ENCODE measurements at regions of chr19 and their contacts with region 1.

Region 1: GRCh38 chr19:17511724-17512573 is 500 bp downstream of the PGLS start:
- DNase-seq: peak; percentile 82 to 97 (median 94)
- ATAC-seq: peak; percentile 78 to 83
- H3K4me3 Mint-ChIP-seq: peak overlapping the region; percentile 88 to 100 (median 100)
- H3K27ac Mint-ChIP-seq: peak overlapping the region; percentile 92 to 99 (median 95)
- H3K4me1 Mint-ChIP-seq: peaks cover 19 to 54% (median 43%) of the 10 kb centered on the region in 4 donors
- H3K27me3 Mint-ChIP-seq: no peaks in the 10 kb centered on the region

Region 2: DNA sequence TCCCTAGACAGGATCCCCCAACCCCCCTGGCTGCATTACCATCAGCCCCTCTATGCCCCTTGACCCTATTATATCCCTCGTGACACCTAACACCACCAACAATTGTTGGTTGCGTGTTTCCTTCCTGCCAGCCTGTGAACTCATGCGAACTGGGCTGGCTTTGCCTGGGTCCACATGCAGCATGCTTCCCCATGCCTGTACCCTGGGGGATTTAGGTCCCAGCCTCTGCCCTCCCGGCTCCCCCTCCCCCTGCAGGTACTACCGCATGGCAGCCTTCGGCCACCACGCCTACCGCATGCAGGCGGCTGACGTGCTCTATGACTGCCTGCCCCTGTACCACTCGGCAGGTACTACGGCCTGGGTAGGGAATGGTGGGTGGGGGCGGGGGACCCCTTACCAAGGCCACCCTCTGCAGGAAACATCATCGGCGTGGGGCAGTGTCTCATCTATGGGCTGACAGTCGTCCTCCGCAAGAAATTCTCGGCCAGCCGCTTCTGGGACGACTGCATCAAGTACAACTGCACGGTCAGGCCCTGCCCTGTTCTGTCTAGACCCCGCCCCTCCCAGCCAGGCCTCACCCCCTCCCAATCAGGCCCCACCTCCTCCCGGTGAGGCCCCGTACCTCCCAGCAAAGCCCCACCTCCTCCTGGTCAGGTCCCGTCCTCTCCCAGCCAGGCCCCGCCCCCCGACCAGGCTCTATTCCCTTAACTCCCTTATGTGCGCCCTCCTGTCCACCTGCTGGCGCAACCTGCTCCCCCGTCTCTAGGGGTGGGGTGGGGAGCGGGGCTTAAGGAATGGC is 23.2 kb before region 1 on chr19:
- POLR2A ChIA-PET with region 1: interaction called, 23 read pairs
- DNase-seq: peak; percentile 55 to 82 (median 72)
- ATAC-seq: peak; percentile 72 to 87
- H3K4me3 Mint-ChIP-seq: peak overlapping the region; percentile 81 to 92 (median 85)
- H3K27ac Mint-ChIP-seq: peak overlapping the region; percentile 88 to 99 (median 94)
- H3K4me1 Mint-ChIP-seq: peaks cover 25 to 58% (median 50%) of the 10 kb centered on the region in 4 donors
- H3K27me3 Mint-ChIP-seq: no peaks in the 10 kb centered on the region

Region 3: DNA sequence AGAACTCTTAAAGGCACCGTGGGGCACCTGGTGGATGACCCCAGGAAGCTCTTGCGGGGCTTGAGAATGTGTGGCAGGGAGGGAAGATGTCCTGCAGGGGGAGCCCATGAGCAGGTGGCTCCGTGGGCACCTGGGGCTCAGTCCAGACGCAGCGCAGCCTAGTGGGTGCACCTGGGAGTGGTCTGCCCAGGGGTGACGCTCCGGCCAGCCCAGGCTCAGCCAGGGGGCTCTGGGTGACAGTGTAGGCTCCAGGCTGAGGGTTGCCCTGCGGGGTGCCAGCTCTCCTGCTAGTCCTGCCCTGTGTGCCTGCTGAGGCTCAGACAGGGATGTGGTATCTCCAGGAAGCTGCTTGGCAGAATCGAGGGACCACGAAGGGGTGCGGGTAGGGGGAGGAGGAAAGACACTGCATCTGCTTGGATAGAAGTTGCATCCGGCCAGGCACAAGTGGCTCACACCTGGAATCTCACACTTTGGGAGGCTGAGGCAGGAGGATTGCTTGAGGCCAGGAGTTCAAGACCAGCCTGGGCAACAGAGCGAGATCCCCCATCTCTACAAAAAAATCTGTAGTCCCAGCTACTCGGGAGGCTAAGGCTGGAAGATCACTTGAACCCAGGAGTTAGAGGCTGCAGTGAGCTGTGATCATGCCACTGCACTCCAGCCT is 15.5 kb before region 1 on chr19:
- POLR2A ChIA-PET with region 1: interaction called, 14 read pairs
- DNase-seq: peak; percentile 55 to 87 (median 76)
- ATAC-seq: peak; percentile 95 to 98
- H3K4me3 Mint-ChIP-seq: peak overlapping the region in 5 of 10 donors; percentile 4 to 68 (median 29)
- H3K27ac Mint-ChIP-seq: peak overlapping the region in 7 of 10 donors; percentile 48 to 85 (median 65)
- H3K4me1 Mint-ChIP-seq: peaks cover 17 to 38% (median 29%) of the 10 kb centered on the region in 4 donors
- H3K27me3 Mint-ChIP-seq: no peaks in the 10 kb centered on the region

Region 4: DNA sequence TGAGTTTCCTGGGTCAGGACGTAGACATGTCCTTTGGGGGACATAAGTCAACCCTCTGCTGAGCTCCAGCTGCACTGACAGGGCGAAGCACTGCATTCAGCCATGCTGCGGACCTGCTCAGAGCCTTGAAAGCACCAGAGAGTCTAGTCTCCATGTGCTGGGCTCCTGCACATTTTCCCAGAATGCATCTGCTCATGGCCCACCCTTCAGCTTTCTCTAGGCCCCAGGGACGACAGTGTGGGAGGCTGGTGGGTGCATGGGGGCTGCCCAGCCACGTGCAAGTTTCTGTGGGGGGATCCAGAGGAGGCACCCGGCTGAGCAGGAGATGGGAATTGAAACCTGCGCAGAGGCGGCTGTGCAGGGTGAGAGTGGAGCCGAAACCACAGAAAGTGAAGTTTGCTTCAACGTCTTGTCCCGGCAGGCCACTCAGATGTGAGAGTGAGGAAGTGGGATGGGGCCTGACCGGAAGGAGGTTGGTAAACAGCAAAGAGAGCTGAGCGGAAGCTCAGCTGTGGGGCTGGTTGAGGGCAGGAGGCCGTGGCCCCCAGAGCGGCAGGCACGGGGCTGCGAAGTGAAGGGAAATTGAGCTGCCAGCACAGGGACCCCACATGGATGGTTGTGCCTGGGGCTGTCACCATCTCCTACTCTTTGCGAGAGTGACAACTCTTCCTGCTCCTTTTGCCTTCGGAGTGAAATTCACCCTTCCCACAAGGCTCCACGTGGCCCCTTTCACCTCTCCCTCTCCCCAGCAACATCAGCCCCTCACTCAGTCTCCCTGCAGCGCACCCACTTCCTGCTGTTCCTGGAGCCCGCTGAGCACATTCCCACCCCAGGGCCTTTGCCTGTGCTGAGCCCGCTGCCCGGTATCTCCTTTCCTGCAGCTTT is 11.3 kb after region 1 on chr19:
- POLR2A ChIA-PET with region 1: interaction called, 122 read pairs
- DNase-seq: peak in 9 of 10 donors; percentile 7 to 75 (median 54)
- ATAC-seq: peak; percentile 76 to 82
- H3K4me3 Mint-ChIP-seq: peak overlapping the region; percentile 65 to 87 (median 78)
- H3K27ac Mint-ChIP-seq: peak overlapping the region; percentile 92 to 98 (median 96)
- H3K4me1 Mint-ChIP-seq: peaks cover 20 to 56% (median 43%) of the 10 kb centered on the region in 4 donors
- H3K27me3 Mint-ChIP-seq: no peaks in the 10 kb centered on the region

Region 5: GRCh38 chr19:17539238-17540117 is 27.5 kb after region 1 on chr19:
- POLR2A ChIA-PET with region 1: interaction called, 11 read pairs
- DNase-seq: peak; percentile 93 to 99 (median 96)
- ATAC-seq: peak; percentile 92 to 93
- H3K4me3 Mint-ChIP-seq: peak overlapping the region; percentile 81 to 94 (median 86)
- H3K27ac Mint-ChIP-seq: peak overlapping the region; percentile 37 to 87 (median 72)
- H3K4me1 Mint-ChIP-seq: peaks cover 15 to 29% (median 18%) of the 10 kb centered on the region in 4 donors
- H3K27me3 Mint-ChIP-seq: no peaks in the 10 kb centered on the region

Region 6: GRCh38 chr19:17555480-17555928 is 43.6 kb after region 1 on chr19 and contains the start of gene COLGALT1:
- POLR2A ChIA-PET with region 1: interaction called, 12 read pairs
- DNase-seq: peak; percentile 89 to 99 (median 96)
- ATAC-seq: peak; percentile 96 to 99
- H3K4me3 Mint-ChIP-seq: peak within 1 kb of the TSS; percentile 79 to 88 (median 82)
- H3K27ac Mint-ChIP-seq: peak within 1 kb of the TSS in 8 of 10 donors; percentile 3 to 81 (median 63)
- H3K4me1 Mint-ChIP-seq: peaks cover 7 to 29% (median 19%) of the 10 kb centered on the region in 4 donors
- H3K27me3 Mint-ChIP-seq: no peaks in the 10 kb centered on the region
- polyA plus RNA-seq, gene COLGALT1: 15.6 to 25.8 (median 17.1) TPM

Region 7: DNA sequence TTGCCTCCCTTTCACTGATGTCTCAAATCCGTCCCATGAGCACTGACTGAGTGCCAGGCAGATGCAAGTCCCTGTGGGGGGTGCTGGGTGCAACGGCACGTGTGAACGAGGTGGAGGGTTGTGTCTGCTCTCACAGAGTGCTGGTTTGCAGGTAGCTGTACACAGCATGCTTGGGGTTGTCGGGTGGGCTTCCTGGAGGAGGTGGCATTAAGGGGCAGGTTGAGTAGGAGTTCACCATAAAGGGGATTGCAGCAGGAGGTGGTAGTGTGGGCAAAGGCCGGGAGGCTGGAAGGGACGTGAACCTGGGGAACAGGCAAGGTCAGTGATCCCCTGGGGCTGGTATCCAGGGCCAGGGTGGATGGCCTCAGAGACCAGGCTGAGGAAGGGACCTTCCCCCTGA is 60.7 kb after region 1 on chr19:
- POLR2A ChIA-PET with region 1: interaction called, 12 read pairs
- DNase-seq: no peak
- ATAC-seq: no peak
- H3K4me3 Mint-ChIP-seq: no peak overlapping the region
- H3K27ac Mint-ChIP-seq: peak overlapping the region in 4 of 10 donors; percentile 34 to 73 (median 42)
- H3K4me1 Mint-ChIP-seq: peaks cover 0 to 6% (median 4%) of the 10 kb centered on the region in 4 donors
- H3K27me3 Mint-ChIP-seq: no peaks in the 10 kb centered on the region

Region 8: GRCh38 chr19:17598953-17599352 is 87.0 kb after region 1 on chr19:
- POLR2A ChIA-PET with region 1: no interaction called
- DNase-seq: no peak
- ATAC-seq: no peak
- H3K4me3 Mint-ChIP-seq: no peak overlapping the region
- H3K27ac Mint-ChIP-seq: no peak overlapping the region
- H3K4me1 Mint-ChIP-seq: peaks cover 0 to 5% (median under 1%) of the 10 kb centered on the region in 4 donors
- H3K27me3 Mint-ChIP-seq: peaks cover 16 to 39% (median 27%) of the 10 kb centered on the region in 5 donors